ENCODE measurements at regions of chr7 and their contacts with region 1.

Region 1: GRCh38 chr7:47945261-47946001 is 2.8 kb downstream of the PKD1L1 start:
- DNase-seq: peak; percentile 74
- H3K4me3 ChIP-seq: no peak overlapping the region
- H3K27ac ChIP-seq: no peak overlapping the region
- H3K4me1 ChIP-seq: peaks cover 24 to 35% of the 10 kb centered on the region in 2 experiments
- H3K27me3 ChIP-seq: no peaks in the 10 kb centered on the region
- CTCF ChIP-seq: peak; percentile 99
- EP300 ChIP-seq: no peak
- RAD21 ChIP-seq: peak; percentile 93

Region 2: GRCh38 chr7:46534664-46535588 is 1410.5 kb before region 1 on chr7:
- CTCF ChIA-PET with region 1: no interaction called
- POLR2A ChIA-PET with region 1: no interaction called
- DNase-seq: no peak
- H3K4me3 ChIP-seq: no peak overlapping the region
- H3K27ac ChIP-seq: no peak overlapping the region
- H3K4me1 ChIP-seq: no peaks in the 10 kb centered on the region
- H3K27me3 ChIP-seq: no peaks in the 10 kb centered on the region
- CTCF ChIP-seq: no peak
- EP300 ChIP-seq: no peak
- RAD21 ChIP-seq: no peak

Region 3: DNA sequence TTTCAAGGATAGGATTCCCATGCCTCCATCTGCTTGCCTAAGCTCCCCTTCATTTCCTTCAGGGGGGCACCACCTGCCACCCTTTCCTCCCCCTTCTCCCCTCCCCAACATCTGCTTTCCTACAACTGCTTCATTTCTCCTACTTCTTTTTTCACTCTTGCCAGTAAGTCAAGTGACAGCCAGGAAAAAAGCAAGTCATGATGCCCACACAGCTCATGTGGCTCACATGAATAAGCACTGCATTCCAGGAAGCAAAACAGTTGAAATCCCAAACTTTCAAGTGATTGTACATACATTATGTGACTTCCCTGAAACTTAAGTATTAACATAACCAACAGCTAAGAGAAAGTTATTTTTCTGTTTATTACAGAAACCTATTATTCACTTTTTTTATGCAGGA is 442.1 kb before region 1 on chr7:
- CTCF ChIA-PET with region 1: no interaction called
- POLR2A ChIA-PET with region 1: no interaction called
- DNase-seq: no peak
- H3K4me3 ChIP-seq: no peak overlapping the region
- H3K27ac ChIP-seq: peak overlapping the region; percentile 17 to 75; a peak in 2 of 4 replicates
- H3K4me1 ChIP-seq: peaks cover 16 to 34% of the 10 kb centered on the region in 2 experiments
- H3K27me3 ChIP-seq: no peaks in the 10 kb centered on the region
- CTCF ChIP-seq: no peak
- EP300 ChIP-seq: no peak
- RAD21 ChIP-seq: no peak

Region 4: DNA sequence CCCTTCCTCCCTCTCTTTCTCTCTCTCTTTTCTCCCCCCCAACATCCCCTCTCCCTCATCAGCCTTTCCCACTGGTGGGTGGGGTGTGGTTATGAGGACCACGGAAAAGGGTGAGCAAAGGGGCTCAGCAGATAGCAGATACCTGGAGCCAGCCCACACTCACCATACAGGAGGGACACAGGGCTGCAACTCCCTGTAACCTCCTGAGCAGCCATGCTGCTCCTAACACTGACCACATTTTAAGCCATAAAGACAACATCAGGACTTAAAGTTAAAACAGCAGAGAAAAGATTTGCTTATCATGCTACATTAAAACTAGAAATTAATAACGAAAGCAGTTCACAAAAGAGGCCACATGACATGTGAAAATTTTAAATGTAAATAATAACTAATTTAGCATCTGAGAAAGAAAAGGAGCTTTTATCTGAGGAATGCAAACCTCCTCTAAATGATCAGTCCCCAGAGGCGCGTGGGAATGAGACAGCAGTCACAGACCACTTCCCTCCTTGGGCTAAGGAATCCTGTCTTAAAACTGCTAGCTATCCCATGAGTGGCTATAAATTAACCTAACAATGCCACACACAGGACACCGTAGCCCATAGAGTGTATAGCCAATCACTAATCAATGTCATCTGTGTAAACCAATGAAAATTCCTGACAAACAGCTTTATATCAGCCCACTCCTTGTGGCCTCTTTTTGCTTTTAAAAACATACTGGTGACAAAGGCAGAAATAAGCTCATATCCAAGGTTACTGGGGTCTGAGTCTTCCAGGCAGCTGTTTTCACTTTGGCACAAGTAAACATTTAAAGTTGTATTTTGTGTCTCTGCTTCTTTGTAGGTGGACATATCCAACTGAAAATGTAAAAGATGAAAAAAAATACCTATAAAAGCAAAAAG is 30.5 kb before region 1 on chr7:
- CTCF ChIA-PET with region 1: interaction called, 19 read pairs
- POLR2A ChIA-PET with region 1: no interaction called
- DNase-seq: no peak
- H3K4me3 ChIP-seq: no peak overlapping the region
- H3K27ac ChIP-seq: no peak overlapping the region
- H3K4me1 ChIP-seq: no peaks in the 10 kb centered on the region; a peak in 1 of 4 replicates
- H3K27me3 ChIP-seq: no peaks in the 10 kb centered on the region
- CTCF ChIP-seq: no peak
- EP300 ChIP-seq: no peak
- RAD21 ChIP-seq: no peak

Region 5: GRCh38 chr7:47968847-47969774 is 23.7 kb after region 1 on chr7:
- CTCF ChIA-PET with region 1: interaction called, 221 read pairs
- POLR2A ChIA-PET with region 1: interaction called, 5 read pairs
- DNase-seq: peak; percentile 89
- H3K4me3 ChIP-seq: no peak overlapping the region; a peak in 1 of 4 replicates
- H3K27ac ChIP-seq: no peak overlapping the region
- H3K4me1 ChIP-seq: peaks cover 0 to 2% of the 10 kb centered on the region in 2 experiments; a peak in 2 of 4 replicates
- H3K27me3 ChIP-seq: no peaks in the 10 kb centered on the region
- CTCF ChIP-seq: peak; percentile 100
- EP300 ChIP-seq: no peak
- RAD21 ChIP-seq: peak; percentile 82

Region 6: GRCh38 chr7:47991741-47992311 is 46.4 kb after region 1 on chr7:
- CTCF ChIA-PET with region 1: interaction called, 10 read pairs
- POLR2A ChIA-PET with region 1: no interaction called
- DNase-seq: peak; percentile 59
- H3K4me3 ChIP-seq: no peak overlapping the region
- H3K27ac ChIP-seq: no peak overlapping the region
- H3K4me1 ChIP-seq: no peaks in the 10 kb centered on the region; a peak in 1 of 4 replicates
- H3K27me3 ChIP-seq: no peaks in the 10 kb centered on the region; the same call in 1 of the 2 replicates
- CTCF ChIP-seq: peak; percentile 51
- EP300 ChIP-seq: no peak
- RAD21 ChIP-seq: peak; percentile 49

Region 7: DNA sequence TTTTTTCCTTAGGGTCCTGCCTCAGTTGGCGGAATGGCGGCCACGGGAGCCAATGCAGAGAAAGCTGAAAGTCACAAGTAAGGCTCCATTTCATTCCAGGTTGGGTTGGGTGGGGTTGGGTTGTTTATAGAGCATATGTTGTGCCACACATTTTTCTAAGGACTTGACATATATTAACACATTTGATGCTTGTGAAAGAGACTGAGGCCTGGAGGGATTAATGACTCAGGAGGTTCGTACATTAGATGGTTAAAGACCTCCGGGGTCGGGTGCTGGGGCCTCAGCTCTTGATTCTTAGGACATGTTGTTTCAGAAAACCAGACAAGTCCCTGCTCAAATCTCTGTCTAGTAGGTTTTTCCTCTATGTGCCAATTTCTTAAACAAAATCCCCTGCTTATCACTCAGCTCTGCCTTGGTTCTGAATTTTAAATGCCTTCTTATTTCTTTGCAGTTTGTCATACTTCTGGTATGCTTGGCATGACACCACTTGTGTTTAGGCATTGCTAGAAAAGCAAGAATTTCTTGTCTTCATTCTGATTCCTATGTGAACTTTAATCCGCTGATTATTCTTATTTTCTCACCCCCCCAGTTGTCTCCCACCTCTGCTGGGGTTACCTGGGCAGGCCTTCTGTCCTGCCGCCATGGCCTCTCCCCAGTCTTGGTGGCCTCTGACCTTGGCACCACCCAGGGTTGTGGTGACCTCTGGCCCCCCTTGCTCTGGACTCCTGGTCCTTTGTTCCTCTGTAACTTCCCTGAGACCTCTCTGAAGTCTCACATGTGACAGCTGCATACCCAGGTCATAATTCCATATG is 149.5 kb after region 1 on chr7:
- CTCF ChIA-PET with region 1: interaction called, 22 read pairs
- POLR2A ChIA-PET with region 1: no interaction called
- DNase-seq: no peak
- H3K4me3 ChIP-seq: no peak overlapping the region
- H3K27ac ChIP-seq: peak overlapping the region; percentile 18 to 46; a peak in 3 of 4 replicates
- H3K4me1 ChIP-seq: peaks cover 3 to 18% of the 10 kb centered on the region in 2 experiments; a peak in 3 of 4 replicates
- H3K27me3 ChIP-seq: no peaks in the 10 kb centered on the region
- CTCF ChIP-seq: no peak
- EP300 ChIP-seq: no peak
- RAD21 ChIP-seq: no peak

Region 8: DNA sequence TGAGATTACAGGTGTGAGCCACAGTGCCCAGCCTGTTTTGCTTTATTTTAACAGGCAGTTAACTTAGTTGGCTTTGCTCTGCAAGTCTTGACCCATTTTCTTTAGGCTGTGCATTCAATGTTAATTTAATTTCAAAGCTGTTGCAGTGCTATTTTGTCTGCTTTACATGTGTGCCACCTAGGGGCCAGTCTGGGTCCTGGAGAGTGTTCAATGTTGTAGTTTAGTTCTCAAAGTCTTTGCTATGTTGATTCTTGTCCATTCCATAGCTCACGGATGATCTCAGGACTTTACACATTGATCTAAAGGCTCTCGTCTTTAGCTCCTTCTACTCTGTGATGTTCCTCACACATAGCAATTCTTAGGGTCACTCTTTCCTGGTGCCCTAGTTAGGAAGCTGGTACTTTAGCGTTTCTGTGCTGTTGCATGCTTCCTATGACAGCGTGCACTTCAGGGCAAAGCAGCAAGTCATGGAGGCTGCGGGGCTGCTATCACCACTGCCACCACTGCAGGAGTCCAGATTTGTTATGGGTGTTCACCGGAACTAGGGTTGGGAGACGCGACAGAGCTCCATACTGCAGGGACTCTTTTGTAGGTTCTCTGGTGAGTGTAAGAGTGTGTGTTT is 209.5 kb after region 1 on chr7:
- CTCF ChIA-PET with region 1: interaction called, 20 read pairs
- POLR2A ChIA-PET with region 1: no interaction called
- DNase-seq: peak; percentile 32
- H3K4me3 ChIP-seq: peak overlapping the region in 1 of 2 experiments; percentile 14; a peak in 1 of 4 replicates
- H3K27ac ChIP-seq: no peak overlapping the region
- H3K4me1 ChIP-seq: no peaks in the 10 kb centered on the region
- H3K27me3 ChIP-seq: peaks cover 55% of the 10 kb centered on the region
- CTCF ChIP-seq: peak; percentile 92
- EP300 ChIP-seq: no peak
- RAD21 ChIP-seq: peak; percentile 77